ENCODE measurements at regions of chr5 and their contacts with region 1.

Region 1: GRCh38 chr5:149839761-149840160 is 104.8 kb downstream of the PDE6A start:
- DNase-seq: no peak
- H3K4me3 ChIP-seq: no peak overlapping the region
- H3K27ac ChIP-seq: no peak overlapping the region
- H3K4me1 ChIP-seq: peaks cover 0 to 13% (median 6%) of the 10 kb centered on the region in 4 donors
- H3K27me3 ChIP-seq: no peaks in the 10 kb centered on the region
- CTCF ChIP-seq: no peak
- EP300 ChIP-seq: no peak
- POLR2A ChIP-seq: no peak

Region 2: GRCh38 chr5:149471406-149472183 is 368.2 kb before region 1 on chr5:
- in situ Hi-C with region 1: no loop called
- intact Hi-C with region 1: no loop called
- DNase-seq: peak; percentile 84
- H3K4me3 ChIP-seq: no peak overlapping the region
- H3K27ac ChIP-seq: peak overlapping the region; percentile 78 to 84 (median 81)
- H3K4me1 ChIP-seq: peaks cover 13 to 44% (median 32%) of the 10 kb centered on the region in 4 donors
- H3K27me3 ChIP-seq: no peaks in the 10 kb centered on the region
- CTCF ChIP-seq: no peak
- EP300 ChIP-seq: peak; percentile 60
- POLR2A ChIP-seq: peak; percentile 33

Region 3: GRCh38 chr5:149969181-149969930 is 129.6 kb after region 1 on chr5:
- in situ Hi-C with region 1: no loop called
- intact Hi-C with region 1: no loop called
- DNase-seq: no peak
- H3K4me3 ChIP-seq: no peak overlapping the region
- H3K27ac ChIP-seq: no peak overlapping the region
- H3K4me1 ChIP-seq: peaks cover 0 to 28% (median 5%) of the 10 kb centered on the region in 4 donors
- H3K27me3 ChIP-seq: no peaks in the 10 kb centered on the region
- CTCF ChIP-seq: no peak
- EP300 ChIP-seq: no peak
- POLR2A ChIP-seq: no peak

Region 4: GRCh38 chr5:149990518-149991376 is 151.0 kb after region 1 on chr5:
- in situ Hi-C with region 1: loop called in 3 of 4 experiments (anchors 5 kb)
- intact Hi-C with region 1: loop called (anchors 5 kb)
- DNase-seq: peak; percentile 83
- H3K4me3 ChIP-seq: no peak overlapping the region
- H3K27ac ChIP-seq: peak overlapping the region in 1 of 4 donors; percentile 6
- H3K4me1 ChIP-seq: peaks cover 0 to 5% (median 2%) of the 10 kb centered on the region in 4 donors
- H3K27me3 ChIP-seq: no peaks in the 10 kb centered on the region
- CTCF ChIP-seq: peak; percentile 88 to 97 (median 92)
- EP300 ChIP-seq: no peak
- POLR2A ChIP-seq: no peak